ENCODE measurements at regions of chr6 and their contacts with region 1.

Region 1: GRCh38 chr6:27809939-27810767 is 102.0 kb downstream of the OR2B2 start:
- DNase-seq: peak; percentile 96
- H3K4me3 ChIP-seq: peak overlapping the region; percentile 82
- H3K27ac ChIP-seq: peak overlapping the region; percentile 96
- H3K4me1 ChIP-seq: peaks cover 62% of the 10 kb centered on the region
- CTCF ChIP-seq: peak; percentile 12; the same call in 1 of the 2 replicates

Region 2: DNA sequence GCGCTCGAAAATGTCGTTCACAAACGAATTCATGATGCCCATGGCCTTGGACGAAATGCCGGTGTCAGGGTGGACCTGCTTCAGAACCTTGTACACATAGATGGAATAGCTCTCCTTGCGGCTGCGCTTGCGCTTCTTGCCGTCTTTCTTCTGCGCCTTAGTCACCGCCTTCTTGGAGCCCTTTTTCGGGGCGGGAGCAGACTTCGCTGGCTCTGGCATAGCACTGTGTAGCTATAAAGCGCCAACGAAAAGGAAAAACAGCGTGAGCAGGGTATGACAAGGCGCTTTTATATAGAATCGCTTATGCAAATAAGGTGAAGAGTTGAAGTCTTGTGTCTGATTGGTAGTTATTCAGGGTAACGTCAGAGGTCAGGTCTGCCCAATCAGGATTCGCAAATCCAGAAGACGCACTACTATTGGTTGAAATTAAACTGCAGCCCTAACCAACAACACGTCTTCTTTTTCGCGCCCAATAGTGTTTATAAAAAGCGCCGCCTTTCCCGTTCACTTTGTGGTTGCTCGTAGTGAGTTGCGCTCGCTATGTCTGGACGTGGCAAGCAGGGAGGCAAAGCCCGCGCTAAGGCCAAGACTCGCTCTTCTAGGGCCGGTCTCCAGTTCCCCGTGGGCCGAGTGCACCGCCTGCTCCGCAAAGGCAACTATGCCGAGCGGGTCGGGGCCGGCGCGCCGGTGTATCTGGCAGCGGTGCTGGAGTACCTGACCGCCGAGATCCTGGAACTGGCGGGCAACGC is 677.4 kb before region 1 on chr6:
- CTCF ChIA-PET with region 1: interaction called, 3 read pairs
- POLR2A ChIA-PET with region 1: interaction called, 81 read pairs
- intact Hi-C with region 1: loop called (anchors 1 kb)
- DNase-seq: peak; percentile 98
- H3K4me3 ChIP-seq: peak overlapping the region; percentile 79
- H3K27ac ChIP-seq: peak overlapping the region; percentile 99
- H3K4me1 ChIP-seq: peaks cover 74% of the 10 kb centered on the region
- CTCF ChIP-seq: no peak

Region 3: DNA sequence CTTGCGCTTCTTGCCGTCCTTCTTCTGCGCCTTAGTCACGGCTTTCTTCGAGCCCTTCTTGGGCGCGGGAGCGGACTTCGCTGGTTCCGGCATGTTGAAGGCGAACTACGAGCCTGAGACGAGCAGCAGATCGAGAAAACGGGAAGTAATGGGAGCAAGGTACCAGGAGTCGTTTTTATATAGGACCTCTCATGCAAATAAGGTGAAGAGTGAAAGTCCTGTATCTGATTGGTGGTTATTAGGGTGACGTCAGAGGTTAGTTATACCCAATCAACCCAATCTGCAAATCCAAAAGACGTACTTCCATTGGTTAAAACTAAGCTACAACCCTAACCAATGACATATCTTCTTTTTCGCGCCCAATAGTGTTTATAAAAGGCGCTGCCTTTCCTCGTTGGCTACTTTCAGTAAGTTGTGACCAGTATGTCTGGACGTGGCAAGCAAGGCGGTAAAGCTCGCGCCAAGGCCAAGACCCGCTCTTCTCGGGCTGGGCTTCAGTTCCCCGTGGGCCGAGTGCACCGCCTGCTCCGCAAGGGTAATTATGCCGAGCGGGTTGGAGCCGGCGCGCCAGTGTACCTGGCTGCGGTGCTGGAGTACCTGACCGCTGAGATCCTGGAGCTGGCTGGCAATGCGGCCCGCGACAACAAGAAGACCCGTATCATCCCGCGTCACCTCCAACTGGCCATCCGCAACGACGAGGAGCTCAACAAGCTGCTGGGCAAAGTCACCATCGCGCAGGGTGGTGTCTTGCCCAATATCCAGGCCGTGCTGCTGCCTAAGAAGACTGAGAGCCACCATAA is 663.2 kb before region 1 on chr6:
- CTCF ChIA-PET with region 1: no interaction called
- POLR2A ChIA-PET with region 1: interaction called, 170 read pairs
- intact Hi-C with region 1: loop called (anchors 2 kb)
- DNase-seq: peak; percentile 98
- H3K4me3 ChIP-seq: peak overlapping the region; percentile 73
- H3K27ac ChIP-seq: peak overlapping the region; percentile 99
- H3K4me1 ChIP-seq: peaks cover 60% of the 10 kb centered on the region
- CTCF ChIP-seq: no peak

Region 4: DNA sequence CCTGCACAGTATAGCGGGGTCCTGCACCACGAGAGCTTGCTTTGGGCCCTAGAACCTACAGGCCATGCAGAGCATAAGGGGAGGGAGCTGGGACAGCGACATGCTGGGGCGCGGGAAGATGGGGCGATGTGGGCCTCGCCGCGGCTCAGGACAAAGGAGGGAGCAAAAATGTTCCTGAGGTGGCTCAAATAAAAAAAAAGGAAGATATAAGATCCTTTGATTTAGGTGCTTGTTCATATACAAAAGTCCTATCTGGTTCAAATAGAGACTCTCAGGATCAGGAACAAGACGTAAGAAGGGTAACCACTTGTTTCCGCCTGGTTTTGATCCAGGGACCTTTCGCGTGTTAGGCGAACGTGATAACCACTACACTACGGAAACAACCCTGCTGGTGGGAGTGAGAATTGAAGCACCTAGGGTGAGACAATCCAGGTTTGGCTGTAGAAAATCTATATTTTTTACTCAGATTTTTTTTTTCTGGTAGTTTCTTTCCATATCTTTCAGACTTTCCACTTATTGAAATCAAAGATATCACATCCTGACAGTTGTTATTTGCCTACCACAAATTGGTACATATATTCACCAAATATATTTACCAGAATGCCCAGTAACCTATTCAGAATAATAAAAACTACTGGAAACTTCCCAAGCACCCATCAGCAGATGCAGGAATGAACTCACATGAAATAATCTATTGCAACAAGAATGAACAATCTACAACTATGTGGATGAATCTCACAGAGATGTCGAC is 159.4 kb before region 1 on chr6:
- CTCF ChIA-PET with region 1: no interaction called
- POLR2A ChIA-PET with region 1: no interaction called
- intact Hi-C with region 1: no loop called
- DNase-seq: no peak
- H3K4me3 ChIP-seq: no peak overlapping the region
- H3K27ac ChIP-seq: no peak overlapping the region
- H3K4me1 ChIP-seq: no peaks in the 10 kb centered on the region
- CTCF ChIP-seq: 0 out of 2 replicates have a peak, but pooled peaks have one; percentile 26

Region 5: DNA sequence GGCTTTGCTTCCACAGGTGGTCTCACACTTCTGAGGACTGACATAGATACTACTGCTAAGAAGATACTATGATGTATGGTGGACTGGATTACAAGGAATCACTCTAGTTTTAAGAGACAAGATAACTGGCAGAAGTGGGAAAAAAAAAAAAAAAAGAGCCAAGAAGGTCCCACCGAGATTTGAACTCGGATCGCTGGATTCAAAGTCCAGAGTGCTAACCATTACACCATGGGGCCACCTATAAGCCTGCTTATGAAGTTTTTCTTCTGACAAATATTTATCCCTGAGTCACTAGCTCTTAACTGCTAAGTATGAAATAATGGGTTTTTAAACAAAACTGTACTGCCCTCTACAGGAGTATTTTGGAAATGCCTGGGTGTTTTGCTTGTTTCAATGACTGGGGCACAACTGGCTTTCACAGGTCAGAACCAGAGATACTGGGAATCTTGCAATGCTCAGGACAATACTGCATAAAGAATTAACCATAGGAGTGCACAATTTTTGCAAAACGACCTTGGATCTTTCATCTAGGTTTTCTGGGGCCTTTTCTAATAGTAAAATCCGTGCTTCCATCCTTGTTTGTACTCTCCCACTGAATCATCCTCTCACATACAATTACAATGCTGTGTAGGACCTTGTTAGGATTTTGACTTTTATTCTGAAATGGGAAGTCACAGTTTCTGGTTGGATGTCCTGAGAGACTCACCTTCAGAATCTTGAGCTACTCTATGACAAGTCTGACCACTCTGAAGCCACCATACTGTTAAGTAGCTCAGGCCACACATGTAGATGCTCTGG is 14.3 kb before region 1 on chr6:
- CTCF ChIA-PET with region 1: interaction called, 3 read pairs
- POLR2A ChIA-PET with region 1: interaction called, 45 read pairs
- intact Hi-C with region 1: no loop called
- DNase-seq: peak; percentile 88
- H3K4me3 ChIP-seq: peak overlapping the region; percentile 33
- H3K27ac ChIP-seq: peak overlapping the region; percentile 32
- H3K4me1 ChIP-seq: peaks cover 33% of the 10 kb centered on the region
- CTCF ChIP-seq: peak; percentile 88

Region 6: GRCh38 chr6:27838058-27838944 is 28.1 kb after region 1 on chr6:
- CTCF ChIA-PET with region 1: no interaction called
- POLR2A ChIA-PET with region 1: interaction called, 106 read pairs
- intact Hi-C with region 1: no loop called
- DNase-seq: peak; percentile 99
- H3K4me3 ChIP-seq: peak overlapping the region; percentile 87
- H3K27ac ChIP-seq: peak overlapping the region; percentile 97
- H3K4me1 ChIP-seq: peaks cover 37% of the 10 kb centered on the region
- CTCF ChIP-seq: no peak

Region 7: DNA sequence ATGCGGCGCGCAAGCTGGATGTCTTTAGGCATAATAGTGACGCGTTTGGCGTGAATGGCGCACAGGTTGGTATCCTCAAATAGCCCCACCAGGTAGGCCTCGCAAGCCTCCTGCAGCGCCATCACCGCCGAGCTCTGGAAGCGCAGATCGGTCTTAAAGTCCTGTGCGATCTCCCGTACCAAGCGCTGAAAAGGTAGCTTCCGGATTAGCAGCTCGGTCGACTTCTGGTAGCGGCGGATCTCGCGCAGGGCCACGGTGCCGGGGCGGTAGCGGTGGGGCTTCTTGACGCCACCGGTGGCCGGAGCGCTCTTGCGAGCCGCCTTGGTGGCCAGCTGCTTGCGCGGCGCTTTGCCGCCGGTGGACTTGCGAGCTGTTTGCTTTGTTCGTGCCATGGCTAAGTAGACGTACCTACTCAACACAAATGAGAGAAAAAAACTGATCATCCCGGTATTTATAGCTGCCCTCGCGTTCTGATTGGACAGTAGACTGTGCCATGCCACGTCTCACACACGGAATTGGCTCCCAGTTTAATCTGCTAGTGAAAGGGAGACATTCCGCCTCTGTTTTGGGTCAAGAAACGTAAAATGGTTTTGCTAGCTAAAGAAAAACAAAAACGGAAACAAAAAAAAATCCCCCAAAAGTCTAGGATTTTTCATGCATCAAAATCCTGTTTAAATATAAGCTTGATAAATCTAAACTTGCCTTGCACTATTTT is 61.9 kb after region 1 on chr6:
- CTCF ChIA-PET with region 1: interaction called, 3 read pairs
- POLR2A ChIA-PET with region 1: interaction called, 380 read pairs
- intact Hi-C with region 1: loop called (anchors 2 kb)
- DNase-seq: peak; percentile 95
- H3K4me3 ChIP-seq: peak overlapping the region; percentile 69
- H3K27ac ChIP-seq: peak overlapping the region; percentile 99
- H3K4me1 ChIP-seq: peaks cover 71% of the 10 kb centered on the region
- CTCF ChIP-seq: peak; percentile 44

Region 8: DNA sequence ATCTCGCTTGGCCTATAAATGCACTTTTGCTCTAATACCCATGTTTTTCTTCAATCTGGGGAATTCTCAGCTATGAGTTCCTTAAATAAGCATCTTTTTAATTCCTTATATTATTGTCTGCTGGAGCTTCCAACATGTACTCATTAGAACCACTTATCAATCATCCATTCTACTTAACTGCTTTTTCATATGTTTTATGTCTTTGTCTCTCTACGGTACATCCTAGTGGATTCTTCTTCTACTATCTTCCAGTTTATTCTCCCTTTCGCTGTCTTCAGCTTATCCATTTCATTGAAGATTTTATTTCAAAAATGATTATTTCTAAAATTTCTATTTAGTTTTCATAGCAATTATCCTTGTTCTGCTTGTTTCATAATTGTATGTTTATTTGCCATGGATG is 301.8 kb after region 1 on chr6:
- CTCF ChIA-PET with region 1: no interaction called
- POLR2A ChIA-PET with region 1: no interaction called
- intact Hi-C with region 1: no loop called
- DNase-seq: no peak
- H3K4me3 ChIP-seq: no peak overlapping the region
- H3K27ac ChIP-seq: no peak overlapping the region
- H3K4me1 ChIP-seq: no peaks in the 10 kb centered on the region
- CTCF ChIP-seq: no peak

Measured in OCI-LY7 (cell line).